ENCODE measurements at regions of chr20 and their contacts with region 1.

Region 1: GRCh38 chr20:1108437-1108920 is 9.9 kb upstream of the PSMF1 start:
- DNase-seq: peak; percentile 43 to 81 (median 59)
- H3K4me3 ChIP-seq: no peak overlapping the region
- H3K27ac ChIP-seq: no peak overlapping the region
- H3K4me1 ChIP-seq: no peaks in the 10 kb centered on the region
- H3K27me3 ChIP-seq: no peaks in the 10 kb centered on the region
- CTCF ChIP-seq: peak; percentile 34 to 80 (median 62)
- POLR2A ChIP-seq: no peak

Region 2: GRCh38 chr20:1199212-1199873 is 90.9 kb after region 1 on chr20:
- intact Hi-C with region 1: no loop called
- DNase-seq: no peak
- H3K4me3 ChIP-seq: no peak overlapping the region
- H3K27ac ChIP-seq: no peak overlapping the region
- H3K4me1 ChIP-seq: no peaks in the 10 kb centered on the region
- H3K27me3 ChIP-seq: no peaks in the 10 kb centered on the region
- CTCF ChIP-seq: no peak
- POLR2A ChIP-seq: no peak

Region 3: GRCh38 chr20:1212607-1213396 is 104.3 kb after region 1 on chr20:
- intact Hi-C with region 1: loop called in 1 of 2 experiments (anchors 10 kb)
- DNase-seq: peak; percentile 54 to 88 (median 75)
- H3K4me3 ChIP-seq: no peak overlapping the region
- H3K27ac ChIP-seq: no peak overlapping the region
- H3K4me1 ChIP-seq: no peaks in the 10 kb centered on the region
- H3K27me3 ChIP-seq: peaks cover 3% of the 10 kb centered on the region
- CTCF ChIP-seq: peak; percentile 63 to 81 (median 74)
- POLR2A ChIP-seq: no peak

Measured in adrenal gland (tissue), 19 donors.